Activated CD4-positive, alpha-beta memory T cell treated with anti-CD3 and anti-CD28 coated beads, Interleukin-2, amount 10 ng/mL, durations not matched to agents 7 days and 5 days (primary cell): ENCODE measurements at regions of chr17 and their contacts with region 1.

Region 1: DNA sequence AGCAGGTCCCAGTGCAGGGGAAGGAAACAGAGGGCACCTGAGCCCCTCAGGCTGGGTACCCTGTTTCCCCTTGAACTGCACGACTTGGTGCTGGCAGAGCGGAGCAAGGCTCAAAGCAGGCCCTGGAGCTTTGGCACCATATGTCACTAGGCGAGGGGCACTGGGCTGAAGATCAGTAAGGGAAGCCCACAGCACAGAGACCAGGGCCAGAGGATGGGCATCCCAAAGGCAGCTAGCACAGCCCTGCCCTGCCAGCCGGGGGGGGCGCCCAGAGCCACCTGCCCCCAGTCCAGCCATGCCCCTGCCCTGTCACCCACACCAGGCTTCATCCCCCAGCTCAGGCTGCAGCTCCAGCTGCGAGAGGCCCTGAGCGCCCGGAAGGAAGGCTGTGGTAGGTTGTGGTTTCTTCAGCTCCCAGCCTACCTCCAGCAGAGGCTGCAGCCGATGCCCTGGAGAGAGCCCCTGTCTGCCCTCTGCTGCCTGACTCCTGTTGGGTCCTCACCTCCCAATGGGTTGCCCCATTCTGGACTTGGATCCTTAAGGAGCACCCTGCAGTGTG is 10.9 kb downstream of the NHERF1 start:
- DNase-seq: peak; percentile 82
- H3K4me3 Mint-ChIP-seq: peak overlapping the region; percentile 61
- H3K27ac Mint-ChIP-seq: peak overlapping the region; percentile 79
- H3K4me1 Mint-ChIP-seq: peaks cover 76% of the 10 kb centered on the region
- H3K27me3 Mint-ChIP-seq: no peaks in the 10 kb centered on the region

Region 2: DNA sequence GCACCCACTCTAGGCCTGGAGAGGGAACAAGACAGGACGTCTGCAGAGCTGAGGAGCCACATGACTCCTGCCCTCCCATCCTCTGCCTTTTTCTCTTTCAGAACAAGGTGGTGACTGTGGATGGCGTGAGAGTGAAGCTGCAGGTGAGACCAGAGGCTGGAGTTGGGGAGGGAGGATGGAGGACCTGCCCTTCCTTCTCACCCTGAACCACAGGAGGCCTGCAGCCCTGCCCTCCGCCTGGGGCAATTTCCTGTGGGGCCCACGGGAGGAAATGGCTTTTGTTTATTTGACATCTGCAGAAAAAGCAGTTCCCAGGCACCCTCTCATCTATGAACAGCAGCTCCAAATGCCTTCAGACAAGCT is 17.2 kb before region 1 on chr17:
- CTCF ChIA-PET with region 1: interaction called, 93 read pairs
- POLR2A ChIA-PET with region 1: interaction called, 98 read pairs
- DNase-seq: peak; percentile 84
- H3K4me3 Mint-ChIP-seq: peak overlapping the region; percentile 69
- H3K27ac Mint-ChIP-seq: peak overlapping the region; percentile 91
- H3K4me1 Mint-ChIP-seq: peaks cover 91% of the 10 kb centered on the region
- H3K27me3 Mint-ChIP-seq: no peaks in the 10 kb centered on the region

Region 3: GRCh38 chr17:74770498-74771318 is 11.4 kb after region 1 on chr17:
- CTCF ChIA-PET with region 1: interaction called, 28 read pairs
- POLR2A ChIA-PET with region 1: interaction called, 60 read pairs
- DNase-seq: peak; percentile 78
- H3K4me3 Mint-ChIP-seq: no peak overlapping the region
- H3K27ac Mint-ChIP-seq: peak overlapping the region; percentile 48
- H3K4me1 Mint-ChIP-seq: peaks cover 42% of the 10 kb centered on the region
- H3K27me3 Mint-ChIP-seq: no peaks in the 10 kb centered on the region

Region 4: GRCh38 chr17:74776044-74776977 is 17.0 kb after region 1 on chr17 and contains the start of gene NAT9:
- CTCF ChIA-PET with region 1: interaction called, 28 read pairs
- POLR2A ChIA-PET with region 1: interaction called, 60 read pairs
- DNase-seq: peak; percentile 99
- H3K4me3 Mint-ChIP-seq: peak within 1 kb of the TSS; percentile 99
- H3K27ac Mint-ChIP-seq: peak within 1 kb of the TSS; percentile 85
- H3K4me1 Mint-ChIP-seq: peaks cover 68% of the 10 kb centered on the region
- H3K27me3 Mint-ChIP-seq: no peaks in the 10 kb centered on the region
- total RNA-seq, gene NAT9: 32.1 to 32.3 TPM